ENCODE measurements at regions of chr2 and their contacts with region 1.

Region 1: GRCh38 chr2:232444409-232445148 is 11.4 kb upstream of the ALPI start:
- DNase-seq: peak in 1 of 2 donors; percentile 81
- H3K4me3 ChIP-seq: no peak overlapping the region
- CTCF ChIP-seq: no peak
- POLR2A ChIP-seq: no peak

Region 2: GRCh38 chr2:231905026-231905425 is 539.6 kb before region 1 on chr2:
- intact Hi-C with region 1: loop called (anchors 5 kb)
- DNase-seq: no peak
- H3K4me3 ChIP-seq: no peak overlapping the region
- CTCF ChIP-seq: no peak
- POLR2A ChIP-seq: no peak